Colonic mucosa (tissue), 4 donors: ENCODE measurements at regions of chr20 and their contacts with region 1.

Region 1: DNA sequence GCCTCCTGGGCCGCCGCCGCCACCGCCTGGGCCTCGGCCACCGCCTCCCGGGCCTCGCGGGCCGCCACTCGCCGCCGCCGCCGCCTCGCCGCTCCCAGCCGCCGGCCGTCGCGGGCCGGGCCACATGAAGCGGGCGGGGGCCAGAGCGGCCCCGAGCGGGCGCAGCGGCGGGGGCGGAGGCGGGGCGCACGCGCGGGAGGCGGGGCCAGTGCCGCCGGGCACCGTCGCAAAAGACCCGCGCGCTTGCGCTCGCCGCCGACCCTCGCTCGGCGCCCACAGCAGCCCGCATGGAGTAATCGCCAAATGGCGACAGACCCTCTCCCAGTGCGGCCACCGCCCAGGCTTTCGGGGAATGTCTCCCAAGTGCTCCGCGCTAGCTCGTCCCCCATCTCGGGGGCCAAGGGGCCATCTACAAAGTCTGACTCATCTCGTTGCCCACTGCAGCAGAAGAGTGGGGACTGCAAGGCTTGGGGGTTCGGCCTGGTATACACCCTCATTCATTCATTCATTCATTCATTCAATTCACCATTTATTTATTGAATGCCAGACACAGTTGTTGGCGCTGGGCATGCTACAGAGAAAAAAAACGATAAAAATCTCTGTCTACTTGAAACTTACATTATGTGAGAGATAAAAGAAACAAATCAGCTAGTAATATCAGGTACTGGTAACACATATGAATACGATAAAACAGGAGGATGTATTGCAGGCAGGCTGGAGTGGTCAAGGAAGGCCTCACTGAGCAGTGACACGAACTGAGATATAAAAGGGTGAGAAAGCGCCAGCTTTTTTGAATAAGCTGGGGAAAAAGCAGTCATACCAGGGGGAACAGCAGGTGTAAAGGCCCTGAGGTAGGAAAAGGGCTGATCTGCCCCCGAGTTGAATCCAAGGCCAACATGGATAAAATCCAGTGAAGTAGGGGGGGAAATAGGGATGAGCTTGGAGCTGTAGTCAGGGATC is at the start of gene B4GALT5:
- DNase-seq: peak; percentile 59
- H3K4me3 ChIP-seq: peak within 1 kb of the TSS; percentile 83
- H3K27ac ChIP-seq: peak within 1 kb of the TSS; percentile 89
- H3K4me1 ChIP-seq: no peaks in the 10 kb centered on the region
- H3K27me3 ChIP-seq: no peaks in the 10 kb centered on the region
- CTCF ChIP-seq: no peak
- total RNA-seq, gene B4GALT5: 34.5 to 56.2 TPM

Region 2: DNA sequence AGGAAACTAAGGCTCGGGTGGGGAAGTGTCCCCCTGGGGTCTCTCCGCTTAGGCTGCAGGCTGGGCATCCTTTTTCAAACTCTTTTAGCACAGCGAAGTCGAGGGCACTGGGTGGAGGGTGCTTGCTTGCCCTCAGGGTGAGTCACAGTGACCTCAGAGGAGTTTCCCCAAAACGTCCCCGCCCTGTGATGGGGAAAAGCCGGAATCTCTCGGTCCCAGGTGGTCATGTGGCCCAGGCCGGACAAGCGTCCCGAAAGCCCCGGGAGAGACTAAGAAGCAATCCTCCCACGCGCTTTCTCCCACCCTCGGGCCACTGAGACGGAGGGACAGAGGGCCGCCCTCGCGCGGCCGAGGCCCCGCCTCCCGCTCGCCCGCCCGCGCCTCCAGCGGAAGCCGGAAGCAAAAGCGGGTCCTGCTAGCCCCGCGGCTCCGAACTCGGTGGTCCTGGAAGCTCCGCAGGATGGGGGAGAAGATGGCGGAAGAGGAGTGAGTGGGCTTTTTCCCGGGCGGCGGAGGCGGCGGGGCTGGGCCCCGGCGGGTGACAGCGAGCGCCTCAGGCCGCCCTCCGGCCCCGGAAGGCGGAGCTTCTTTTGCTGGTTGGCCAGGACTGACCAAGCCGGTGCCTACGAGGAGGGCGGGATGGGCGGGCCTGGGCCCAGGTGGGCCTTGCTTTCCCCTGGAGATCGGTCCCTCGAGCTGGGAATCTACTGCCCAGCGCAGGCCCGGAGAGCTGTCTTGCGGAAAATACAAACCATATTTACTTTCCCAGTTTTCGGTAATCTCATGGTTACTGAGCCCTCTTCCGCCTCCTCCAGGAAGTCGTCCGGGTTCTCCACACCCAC is 98.7 kb after region 1 on chr20 and contains the start of gene SLC9A8:
- intact Hi-C with region 1: loop called (anchors 10 kb)
- DNase-seq: peak; percentile 86
- H3K4me3 ChIP-seq: peak within 1 kb of the TSS; percentile 59
- H3K27ac ChIP-seq: peak within 1 kb of the TSS; percentile 95
- H3K4me1 ChIP-seq: peaks cover 8% of the 10 kb centered on the region
- H3K27me3 ChIP-seq: no peaks in the 10 kb centered on the region
- CTCF ChIP-seq: no peak
- total RNA-seq, gene SLC9A8: 6.0 to 11.1 TPM